Endothelial cell of umbilical vein (primary cell): ENCODE measurements at regions of chr5 and their contacts with region 1.

Region 1: DNA sequence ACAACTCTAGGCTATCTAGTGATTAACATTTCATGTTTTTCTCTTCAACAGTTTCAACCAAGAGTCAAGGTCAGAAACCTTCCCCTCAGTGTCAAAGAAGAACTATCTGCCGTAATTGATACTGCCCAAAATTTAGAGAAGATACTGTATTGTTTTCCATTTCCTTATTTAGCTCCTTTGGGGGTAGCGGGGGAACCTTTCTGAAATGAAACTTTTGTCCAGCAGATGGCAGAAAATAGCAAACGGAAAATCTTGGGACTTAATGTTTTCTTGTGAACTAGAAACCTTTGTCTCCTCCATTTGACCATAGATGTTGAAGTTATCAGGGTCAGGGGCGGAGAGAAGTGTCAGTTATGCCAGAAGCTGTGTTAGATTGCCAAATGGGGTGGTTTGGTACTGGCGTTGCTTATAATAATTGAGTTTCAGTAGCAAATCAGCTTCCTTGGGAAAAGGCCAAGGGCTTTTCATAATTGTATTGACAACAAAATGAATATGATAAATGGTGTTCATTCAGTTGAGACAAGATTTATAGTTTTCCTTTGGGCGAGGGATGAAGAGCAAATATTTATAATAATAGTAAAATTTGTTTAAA is 101.7 kb upstream of the TLX3 start:
- DNase-seq: peak; percentile 72
- H3K4me3 ChIP-seq: no peak overlapping the region
- H3K27ac ChIP-seq: no peak overlapping the region
- H3K4me1 ChIP-seq: no peaks in the 10 kb centered on the region
- H3K27me3 ChIP-seq: no peaks in the 10 kb centered on the region
- CTCF ChIP-seq: peak; percentile 41 to 43
- POLR2A ChIP-seq: no peak

Region 2: DNA sequence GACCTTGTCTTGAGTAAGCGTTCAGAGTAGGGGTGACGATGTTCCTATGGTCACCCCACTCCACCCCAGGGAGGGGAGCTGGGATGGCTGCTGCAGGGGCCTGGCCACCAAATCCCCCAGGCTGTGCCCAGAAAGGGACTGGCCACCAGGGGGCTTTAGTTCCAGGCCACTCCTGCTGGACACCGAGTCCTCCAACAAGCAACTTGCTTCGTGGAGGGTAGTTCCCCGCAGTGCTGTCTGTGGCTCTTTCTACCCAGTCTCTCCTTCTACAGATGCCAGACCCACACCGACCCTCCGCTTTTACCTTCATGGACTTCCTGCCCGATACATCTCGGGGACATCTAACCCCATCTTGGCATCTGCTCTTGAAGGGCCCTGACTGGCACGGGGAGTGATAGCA is 459.5 kb before region 1 on chr5:
- CTCF ChIA-PET with region 1: interaction called, 12 read pairs
- POLR2A ChIA-PET with region 1: no interaction called
- dilution Hi-C with region 1: no loop called
- intact Hi-C with region 1: loop called (anchors 1 kb)
- DNase-seq: peak; percentile 29
- H3K4me3 ChIP-seq: no peak overlapping the region
- H3K27ac ChIP-seq: no peak overlapping the region
- H3K4me1 ChIP-seq: peaks cover 6% of the 10 kb centered on the region
- H3K27me3 ChIP-seq: peaks cover 5 to 6% of the 10 kb centered on the region in 2 experiments
- CTCF ChIP-seq: peak; percentile 39 to 70
- POLR2A ChIP-seq: no peak

Region 3: GRCh38 chr5:170986598-170986997 is 220.8 kb before region 1 on chr5:
- CTCF ChIA-PET with region 1: interaction called, 17 read pairs
- POLR2A ChIA-PET with region 1: no interaction called
- dilution Hi-C with region 1: no loop called
- intact Hi-C with region 1: no loop called
- DNase-seq: peak; percentile 78
- H3K4me3 ChIP-seq: no peak overlapping the region
- H3K27ac ChIP-seq: no peak overlapping the region
- H3K4me1 ChIP-seq: peaks cover 7% of the 10 kb centered on the region
- H3K27me3 ChIP-seq: no peaks in the 10 kb centered on the region
- CTCF ChIP-seq: peak in 1 of 2 donors; percentile 10
- POLR2A ChIP-seq: no peak

Region 4: DNA sequence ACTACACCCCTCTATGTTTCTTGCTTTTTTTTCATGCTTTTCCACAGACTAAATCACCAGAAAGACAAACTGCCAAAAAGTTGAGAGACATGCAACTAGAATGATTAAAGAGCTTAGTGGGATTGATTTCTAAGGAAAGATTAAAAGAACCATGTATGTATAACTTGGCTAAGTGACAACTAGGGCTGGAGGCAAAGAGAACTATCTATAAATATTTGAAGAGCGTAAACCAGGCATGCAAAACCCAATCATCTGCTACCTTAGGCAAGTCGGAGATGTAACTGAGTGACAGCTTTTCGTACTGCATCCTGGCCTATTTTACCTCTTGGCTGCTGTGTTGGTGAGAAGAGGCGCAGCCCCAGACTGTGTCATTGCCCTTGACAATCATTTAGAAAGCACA is 19.3 kb before region 1 on chr5:
- CTCF ChIA-PET with region 1: interaction called, 18 read pairs
- POLR2A ChIA-PET with region 1: no interaction called
- dilution Hi-C with region 1: no loop called
- intact Hi-C with region 1: no loop called
- DNase-seq: no peak
- H3K4me3 ChIP-seq: no peak overlapping the region
- H3K27ac ChIP-seq: no peak overlapping the region
- H3K4me1 ChIP-seq: no peaks in the 10 kb centered on the region
- H3K27me3 ChIP-seq: no peaks in the 10 kb centered on the region
- CTCF ChIP-seq: no peak
- POLR2A ChIP-seq: no peak

Region 5: DNA sequence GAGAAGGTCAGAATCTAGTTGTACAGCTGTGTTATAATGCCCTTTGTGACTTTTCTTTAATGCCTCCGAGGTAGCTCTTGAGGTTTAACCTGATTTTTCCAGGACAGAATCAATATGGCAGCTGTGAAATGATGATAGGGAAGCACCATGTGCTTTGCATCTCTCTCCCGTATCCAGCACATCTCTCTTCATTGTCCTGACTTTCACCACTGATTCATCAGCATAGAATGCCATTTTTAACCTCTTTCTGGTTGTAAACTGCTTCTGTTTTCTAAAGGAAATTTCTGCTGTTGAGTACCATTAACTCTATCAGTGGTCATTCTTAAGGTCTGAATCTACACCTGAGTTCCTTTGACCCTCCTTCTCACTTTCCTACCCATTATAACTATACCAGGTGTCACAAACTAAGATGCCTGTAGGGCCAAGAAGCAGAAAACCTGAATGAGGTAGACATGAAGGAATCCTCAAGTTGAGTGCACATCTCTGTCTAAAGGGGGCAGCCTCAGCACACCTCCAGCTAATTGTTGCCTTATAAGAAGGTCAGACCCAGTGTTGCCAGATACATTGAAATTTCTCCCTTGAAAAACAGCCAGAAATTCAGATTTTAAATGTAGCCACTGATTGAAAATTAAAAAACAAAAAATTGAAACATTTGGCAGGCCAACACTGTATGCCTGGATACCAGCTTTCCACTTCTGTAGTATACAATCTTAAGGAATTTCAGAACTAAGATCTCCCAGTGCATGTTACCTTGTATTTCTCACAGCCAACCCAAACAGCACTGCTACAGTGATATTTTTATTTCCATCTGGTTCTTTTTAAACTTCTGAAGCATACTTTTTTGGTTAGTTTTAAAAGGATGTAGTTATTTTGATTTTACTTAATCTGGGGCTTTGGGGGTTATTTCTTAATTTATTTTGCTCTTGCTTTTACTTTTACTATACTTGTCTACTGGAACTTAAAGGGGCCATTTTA is 65.9 kb after region 1 on chr5:
- CTCF ChIA-PET with region 1: interaction called, 17 read pairs
- POLR2A ChIA-PET with region 1: no interaction called
- dilution Hi-C with region 1: no loop called
- intact Hi-C with region 1: no loop called
- DNase-seq: peak; percentile 12
- H3K4me3 ChIP-seq: no peak overlapping the region
- H3K27ac ChIP-seq: no peak overlapping the region
- H3K4me1 ChIP-seq: no peaks in the 10 kb centered on the region
- H3K27me3 ChIP-seq: no peaks in the 10 kb centered on the region
- CTCF ChIP-seq: peak in 1 of 2 donors; percentile 26
- POLR2A ChIP-seq: no peak

Region 6: GRCh38 chr5:171342362-171343111 is 135.2 kb after region 1 on chr5:
- CTCF ChIA-PET with region 1: interaction called, 301 read pairs
- POLR2A ChIA-PET with region 1: no interaction called
- dilution Hi-C with region 1: no loop called
- intact Hi-C with region 1: loop called (anchors 1 kb)
- DNase-seq: peak; percentile 64
- H3K4me3 ChIP-seq: no peak overlapping the region
- H3K27ac ChIP-seq: no peak overlapping the region
- H3K4me1 ChIP-seq: no peaks in the 10 kb centered on the region
- H3K27me3 ChIP-seq: no peaks in the 10 kb centered on the region
- CTCF ChIP-seq: peak; percentile 57 to 61
- POLR2A ChIP-seq: no peak